Activated CD4-positive, alpha-beta memory T cell treated with anti-CD3 and anti-CD28 coated beads for 36 hours (primary cell): ENCODE measurements at regions of chr5 and their contacts with region 1.

Region 1: GRCh38 chr5:181223058-181223728 is at the start of gene TRIM41:
- DNase-seq: peak; percentile 98
- H3K4me3 Mint-ChIP-seq: peak within 1 kb of the TSS; percentile 98
- H3K27ac Mint-ChIP-seq: peak within 1 kb of the TSS; percentile 98
- H3K4me1 Mint-ChIP-seq: peaks cover 48% of the 10 kb centered on the region
- H3K27me3 Mint-ChIP-seq: peaks cover 7% of the 10 kb centered on the region
- total RNA-seq, gene TRIM41: 35.3 to 36.4 TPM

Region 2: DNA sequence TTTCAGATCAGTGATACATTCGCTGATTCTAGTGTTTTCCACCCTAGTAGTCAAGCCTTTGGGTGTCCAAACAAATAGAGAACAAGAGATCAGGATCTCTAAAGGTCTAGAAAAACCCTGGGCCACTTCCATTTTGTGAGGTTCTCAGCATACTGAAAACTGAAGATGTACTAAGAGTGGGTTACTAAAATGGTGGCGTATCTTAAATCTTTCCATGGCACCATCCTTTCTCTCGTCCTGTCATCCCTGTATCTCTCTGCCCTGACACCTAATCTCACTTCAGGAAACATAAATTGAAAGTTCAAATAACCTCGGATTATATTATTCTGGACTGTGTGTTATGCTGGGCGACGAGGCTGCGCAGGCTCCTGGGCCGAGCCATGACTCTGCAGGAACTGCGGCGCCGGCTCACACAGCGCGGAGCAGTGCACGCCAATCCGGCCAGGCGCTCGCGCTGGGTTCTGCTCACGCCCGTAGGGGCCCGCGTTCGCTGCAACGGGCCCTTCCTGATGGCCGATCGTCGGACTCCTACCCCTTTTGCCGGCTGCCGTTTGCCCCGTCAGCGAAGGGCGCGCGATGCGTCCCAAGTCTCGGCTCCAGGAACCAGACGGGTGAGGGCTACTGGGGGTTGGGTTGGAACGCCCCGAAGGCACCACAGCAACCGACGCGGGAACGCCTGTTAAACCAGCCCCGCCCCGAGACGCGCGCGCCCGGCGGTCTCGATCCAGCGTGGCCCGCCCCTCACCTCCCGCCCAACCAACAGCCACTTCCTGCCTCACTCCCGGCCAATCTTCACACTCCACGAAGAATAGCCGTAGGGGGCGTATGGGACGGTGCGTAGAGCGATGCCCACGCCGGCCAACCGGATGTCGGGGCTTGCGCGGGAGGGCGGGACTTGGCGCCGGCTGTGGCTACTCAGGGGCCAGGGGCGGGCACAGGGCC is 1524.9 kb before region 1 on chr5:
- CTCF ChIA-PET with region 1: no interaction called
- POLR2A ChIA-PET with region 1: no interaction called
- intact Hi-C with region 1: loop called (anchors 5 kb)
- DNase-seq: peak; percentile 100
- H3K4me3 Mint-ChIP-seq: peak overlapping the region; percentile 97
- H3K27ac Mint-ChIP-seq: peak overlapping the region; percentile 98
- H3K4me1 Mint-ChIP-seq: peaks cover 35% of the 10 kb centered on the region
- H3K27me3 Mint-ChIP-seq: no peaks in the 10 kb centered on the region

Region 3: GRCh38 chr5:181133610-181134231 is 89.5 kb before region 1 on chr5:
- CTCF ChIA-PET with region 1: no interaction called
- POLR2A ChIA-PET with region 1: no interaction called
- intact Hi-C with region 1: no loop called
- DNase-seq: no peak
- H3K4me3 Mint-ChIP-seq: no peak overlapping the region
- H3K27ac Mint-ChIP-seq: no peak overlapping the region
- H3K4me1 Mint-ChIP-seq: no peaks in the 10 kb centered on the region
- H3K27me3 Mint-ChIP-seq: peaks cover 24% of the 10 kb centered on the region

Region 4: GRCh38 chr5:181159286-181159829 is 63.8 kb before region 1 on chr5:
- CTCF ChIA-PET with region 1: no interaction called
- POLR2A ChIA-PET with region 1: no interaction called
- intact Hi-C with region 1: loop called (anchors 1 kb)
- DNase-seq: peak; percentile 96
- H3K4me3 Mint-ChIP-seq: peak overlapping the region; percentile 36
- H3K27ac Mint-ChIP-seq: peak overlapping the region; percentile 72
- H3K4me1 Mint-ChIP-seq: peaks cover 33% of the 10 kb centered on the region
- H3K27me3 Mint-ChIP-seq: peaks cover 17% of the 10 kb centered on the region

Region 5: DNA sequence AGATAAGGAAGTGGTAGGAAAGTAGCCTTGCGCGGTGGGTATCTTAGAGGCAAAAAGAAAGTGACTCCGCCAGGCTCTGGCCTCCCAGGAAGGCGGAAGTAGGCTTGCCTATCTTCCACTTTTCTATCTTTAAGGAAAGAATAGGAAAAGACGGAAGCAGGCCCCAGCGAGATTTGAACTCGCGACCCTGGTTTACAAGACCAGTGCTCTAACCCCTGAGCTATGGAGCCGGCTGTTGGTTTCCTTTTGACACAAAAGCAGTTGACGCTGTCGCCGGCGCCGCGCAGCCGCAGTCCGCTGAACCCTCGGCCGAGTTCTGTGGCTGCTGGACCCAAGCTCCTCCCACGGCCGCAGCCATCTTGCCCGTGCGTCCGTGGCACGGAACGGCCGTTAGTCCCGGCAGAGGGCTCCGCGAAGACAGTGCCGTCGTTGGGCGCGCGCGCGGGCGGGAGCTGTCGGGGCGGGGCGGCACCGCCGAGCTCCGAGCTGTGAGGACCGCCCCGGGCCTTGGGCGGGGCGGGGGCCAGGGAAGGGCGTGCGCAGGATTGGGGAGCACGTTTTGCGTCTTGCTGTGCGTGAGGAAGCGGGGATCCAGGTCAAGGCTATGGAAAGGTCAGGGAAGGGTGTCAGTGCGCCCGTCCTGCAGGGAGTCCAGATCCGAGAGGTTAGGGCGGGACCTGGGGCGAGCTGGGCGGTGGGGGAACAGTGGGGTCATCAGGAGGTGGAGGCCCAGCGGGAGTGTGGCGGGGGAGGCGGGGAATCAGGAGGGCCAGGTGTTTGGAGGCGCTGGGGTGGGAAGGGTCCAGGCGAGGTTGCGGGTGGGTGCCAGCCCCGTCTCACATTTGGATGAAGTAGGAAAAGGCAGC is 31.4 kb before region 1 on chr5:
- CTCF ChIA-PET with region 1: interaction called, 16 read pairs
- POLR2A ChIA-PET with region 1: interaction called, 13 read pairs
- intact Hi-C with region 1: loop called (anchors 1 kb)
- DNase-seq: peak; percentile 98
- H3K4me3 Mint-ChIP-seq: peak overlapping the region; percentile 80
- H3K27ac Mint-ChIP-seq: peak overlapping the region; percentile 87
- H3K4me1 Mint-ChIP-seq: peaks cover 31% of the 10 kb centered on the region
- H3K27me3 Mint-ChIP-seq: peaks cover 11% of the 10 kb centered on the region

Region 6: GRCh38 chr5:181234455-181235306 is 11.5 kb after region 1 on chr5:
- CTCF ChIA-PET with region 1: no interaction called
- POLR2A ChIA-PET with region 1: interaction called, 100 read pairs
- intact Hi-C with region 1: loop called (anchors 1 kb)
- DNase-seq: no peak
- H3K4me3 Mint-ChIP-seq: no peak overlapping the region
- H3K27ac Mint-ChIP-seq: peak overlapping the region; percentile 64
- H3K4me1 Mint-ChIP-seq: peaks cover 26% of the 10 kb centered on the region
- H3K27me3 Mint-ChIP-seq: no peaks in the 10 kb centered on the region

Region 7: GRCh38 chr5:181260387-181261319 is 37.5 kb after region 1 on chr5 and contains the start of gene TRIM52:
- CTCF ChIA-PET with region 1: interaction called, 3 read pairs
- POLR2A ChIA-PET with region 1: interaction called, 20 read pairs
- intact Hi-C with region 1: loop called (anchors 1 kb)
- DNase-seq: peak; percentile 93
- H3K4me3 Mint-ChIP-seq: peak within 1 kb of the TSS; percentile 96
- H3K27ac Mint-ChIP-seq: peak within 1 kb of the TSS; percentile 97
- H3K4me1 Mint-ChIP-seq: peaks cover 39% of the 10 kb centered on the region
- H3K27me3 Mint-ChIP-seq: no peaks in the 10 kb centered on the region
- total RNA-seq, gene TRIM52: 10.9 to 11.7 TPM